Posterior cingulate gyrus (tissue), 11 donors: ENCODE measurements at regions of chr17 and their contacts with region 1.

Region 1: GRCh38 chr17:44503147-44504029 is at the start of gene GPATCH8:
- DNase-seq: peak; percentile 86 to 99 (median 92)

Region 2: GRCh38 chr17:44344939-44345453 is 158.4 kb before region 1 on chr17 and contains the start of gene GRN:
- intact Hi-C with region 1: loop called (anchors 1 kb)
- DNase-seq: peak; percentile 91 to 99 (median 98)

Region 3: DNA sequence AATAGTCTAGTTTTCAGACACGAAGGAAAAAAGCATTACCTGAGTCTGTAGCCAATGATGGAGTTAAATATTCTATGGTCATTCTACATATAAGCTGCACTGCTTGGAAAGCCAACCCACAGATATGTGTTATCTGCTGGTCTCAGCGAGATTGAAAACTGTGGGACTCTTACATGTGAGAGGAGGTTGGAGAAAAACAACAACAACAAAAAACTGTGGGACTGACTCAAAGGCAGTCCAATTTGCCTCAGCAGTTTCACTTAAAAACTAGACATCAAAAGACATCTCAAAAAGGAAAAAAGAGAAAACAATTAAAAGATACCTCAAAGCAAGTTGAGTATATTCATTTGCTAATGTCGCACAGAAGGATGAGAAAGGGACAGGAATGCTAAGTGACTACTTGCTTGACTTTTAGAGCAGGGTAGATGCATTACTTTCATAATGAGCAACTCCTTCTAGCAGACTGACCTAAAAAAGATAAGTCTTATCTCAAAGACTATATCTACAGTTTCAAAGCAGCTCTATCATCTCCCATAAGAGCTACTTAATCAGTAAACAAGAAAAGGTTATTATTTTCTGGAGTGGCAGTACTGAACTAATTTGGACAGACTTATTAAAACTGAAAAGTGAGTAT is 78.4 kb before region 1 on chr17:
- intact Hi-C with region 1: no loop called
- DNase-seq: no peak

Region 4: DNA sequence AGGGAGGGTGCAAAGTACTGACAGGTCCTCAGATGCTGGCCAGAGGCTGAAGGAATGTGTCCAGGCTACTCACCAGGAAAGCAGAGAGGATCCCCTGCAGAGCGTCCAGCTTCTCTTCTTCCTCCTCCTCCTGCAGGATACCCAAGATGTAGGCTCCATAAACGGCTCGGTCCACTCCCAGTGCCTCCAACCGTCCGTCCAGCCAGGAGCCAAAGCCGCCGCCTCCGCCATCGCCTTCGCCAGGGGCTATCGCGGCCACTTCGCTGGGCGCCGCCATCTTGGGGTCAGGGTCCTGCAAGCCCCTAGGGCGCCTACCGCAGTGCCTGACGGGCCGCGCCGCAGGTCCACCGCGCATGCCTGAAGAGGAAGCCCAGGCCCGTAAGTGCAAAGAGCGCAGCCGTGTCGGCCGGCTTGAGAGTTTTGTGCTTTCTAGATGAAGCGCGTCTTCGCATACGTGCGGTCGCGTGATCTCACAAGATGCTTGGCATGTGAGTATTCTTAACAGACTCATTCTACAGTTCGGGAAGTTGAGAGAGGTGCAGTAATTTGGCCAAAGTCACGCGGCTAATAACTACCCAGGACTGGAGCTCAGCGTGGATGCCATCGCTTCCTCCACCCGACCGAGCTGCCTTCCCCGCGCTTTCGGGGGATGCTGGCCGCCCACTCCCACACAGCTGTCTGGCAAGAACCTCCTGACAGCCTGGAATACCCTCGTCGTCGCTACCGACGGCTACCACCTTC is 186.3 kb after region 1 on chr17 and contains the start of gene CCDC43:
- intact Hi-C with region 1: loop called (anchors 10 kb)
- DNase-seq: peak; percentile 81 to 98 (median 91)